ENCODE measurements at regions of chr7 and their contacts with region 1.

Region 1: GRCh38 chr7:131513245-131514061 is 43.0 kb downstream of the PODXL start:
- DNase-seq: peak; percentile 90
- H3K4me3 Mint-ChIP-seq: no peak overlapping the region
- H3K27ac Mint-ChIP-seq: no peak overlapping the region
- H3K4me1 Mint-ChIP-seq: peaks cover 10% of the 10 kb centered on the region
- H3K27me3 Mint-ChIP-seq: peaks cover 6% of the 10 kb centered on the region

Region 2: DNA sequence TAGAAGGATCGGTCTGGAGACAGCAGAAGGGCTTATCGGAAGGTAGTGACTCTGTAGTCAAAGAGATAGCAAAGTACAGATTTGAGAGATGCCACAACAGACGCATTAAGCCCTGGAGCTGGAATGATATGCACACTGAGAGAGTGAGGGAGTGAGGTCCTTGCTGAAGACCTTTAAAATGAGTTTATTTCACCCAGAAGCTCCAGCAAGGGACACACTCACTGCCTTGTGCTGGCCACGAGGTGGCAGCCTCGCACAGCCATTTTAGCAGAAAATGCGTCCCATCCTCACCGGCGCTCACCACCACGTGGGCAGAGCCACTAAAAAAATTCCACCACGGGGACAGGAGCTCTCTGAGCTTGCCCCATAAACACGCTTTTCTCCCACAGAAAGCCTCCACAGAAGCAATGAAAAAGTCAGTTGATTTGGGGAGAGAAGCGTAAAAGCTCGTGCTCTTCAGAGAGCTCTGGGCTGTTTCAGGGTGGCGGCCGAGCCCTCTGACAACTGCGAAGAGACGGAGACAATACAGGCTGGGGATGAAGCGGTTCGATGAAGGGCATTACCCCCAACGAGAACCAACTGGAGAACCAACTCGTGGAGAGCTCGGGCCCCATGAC is 616.4 kb before region 1 on chr7:
- CTCF ChIA-PET with region 1: interaction called, 4 read pairs
- intact Hi-C with region 1: loop called (anchors 1 kb)
- DNase-seq: peak; percentile 85
- H3K4me3 Mint-ChIP-seq: no peak overlapping the region
- H3K27ac Mint-ChIP-seq: peak overlapping the region; percentile 85
- H3K4me1 Mint-ChIP-seq: peaks cover 88% of the 10 kb centered on the region
- H3K27me3 Mint-ChIP-seq: no peaks in the 10 kb centered on the region

Region 3: DNA sequence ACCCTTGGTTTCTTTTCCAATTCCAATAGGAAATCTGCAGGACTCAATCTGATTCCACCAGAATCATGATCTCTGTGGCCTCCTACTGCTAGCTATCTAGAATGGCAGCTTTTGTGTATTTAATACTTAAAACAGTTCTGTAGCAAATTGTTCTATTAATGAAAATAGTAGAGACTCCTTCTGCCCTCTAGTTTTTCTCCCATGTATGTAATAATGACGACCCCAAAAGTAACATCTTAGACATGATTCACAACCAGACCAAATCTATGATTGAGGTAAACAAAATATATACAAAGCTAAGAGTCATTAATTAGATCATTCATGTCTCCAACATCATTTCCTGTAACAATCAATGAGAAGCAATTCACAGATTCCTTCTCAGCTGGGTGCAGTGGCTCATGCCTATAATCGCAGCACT is 444.8 kb before region 1 on chr7:
- CTCF ChIA-PET with region 1: interaction called, 12 read pairs
- intact Hi-C with region 1: loop called (anchors 1 kb)
- DNase-seq: no peak
- H3K4me3 Mint-ChIP-seq: no peak overlapping the region
- H3K27ac Mint-ChIP-seq: peak overlapping the region; percentile 86
- H3K4me1 Mint-ChIP-seq: peaks cover 73% of the 10 kb centered on the region
- H3K27me3 Mint-ChIP-seq: no peaks in the 10 kb centered on the region

Region 4: GRCh38 chr7:131424219-131424822 is 89.1 kb before region 1 on chr7:
- CTCF ChIA-PET with region 1: no interaction called
- intact Hi-C with region 1: loop called (anchors 1 kb)
- DNase-seq: peak; percentile 8
- H3K4me3 Mint-ChIP-seq: no peak overlapping the region
- H3K27ac Mint-ChIP-seq: no peak overlapping the region
- H3K4me1 Mint-ChIP-seq: peaks cover 13% of the 10 kb centered on the region
- H3K27me3 Mint-ChIP-seq: no peaks in the 10 kb centered on the region

Region 5: GRCh38 chr7:131501422-131501821 is 12.0 kb before region 1 on chr7:
- CTCF ChIA-PET with region 1: interaction called, 24 read pairs
- intact Hi-C with region 1: no loop called
- DNase-seq: peak; percentile 83
- H3K4me3 Mint-ChIP-seq: no peak overlapping the region
- H3K27ac Mint-ChIP-seq: peak overlapping the region; percentile 53
- H3K4me1 Mint-ChIP-seq: peaks cover 35% of the 10 kb centered on the region
- H3K27me3 Mint-ChIP-seq: no peaks in the 10 kb centered on the region

Region 6: DNA sequence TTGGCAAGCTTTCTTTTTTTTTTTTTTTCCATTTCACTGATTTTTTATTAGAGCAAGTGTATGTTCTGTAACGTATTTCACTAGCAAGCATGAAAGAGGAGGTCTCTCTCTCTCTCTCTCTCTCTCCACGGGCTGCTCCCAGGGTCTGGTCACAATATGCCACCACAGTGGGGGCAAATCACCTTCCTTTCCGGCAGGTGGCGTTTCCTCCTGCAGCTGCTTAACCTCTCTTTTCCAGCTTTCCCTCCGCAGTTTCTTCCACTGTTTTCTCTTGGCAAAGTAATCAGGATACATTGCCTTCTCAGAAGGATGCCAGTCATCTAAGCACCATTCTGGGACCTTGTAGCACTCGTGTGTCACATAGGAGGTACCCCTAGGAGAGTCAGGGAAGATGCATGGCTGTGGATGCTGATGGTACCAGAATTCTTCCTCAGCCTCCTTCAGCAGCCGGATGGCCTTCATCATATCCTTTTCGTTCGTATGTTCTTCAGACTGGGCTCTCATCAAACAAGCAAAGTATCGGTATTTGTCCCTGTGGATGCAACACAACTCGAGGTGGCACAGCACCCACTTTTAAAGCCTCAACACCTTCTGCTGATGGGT is 240.3 kb after region 1 on chr7:
- CTCF ChIA-PET with region 1: no interaction called
- intact Hi-C with region 1: no loop called
- DNase-seq: peak; percentile 6
- H3K4me3 Mint-ChIP-seq: no peak overlapping the region
- H3K27ac Mint-ChIP-seq: no peak overlapping the region
- H3K4me1 Mint-ChIP-seq: no peaks in the 10 kb centered on the region
- H3K27me3 Mint-ChIP-seq: peaks cover 4% of the 10 kb centered on the region